B cell (primary cell): ENCODE measurements at regions of chr18 and their contacts with region 1.

Region 1: DNA sequence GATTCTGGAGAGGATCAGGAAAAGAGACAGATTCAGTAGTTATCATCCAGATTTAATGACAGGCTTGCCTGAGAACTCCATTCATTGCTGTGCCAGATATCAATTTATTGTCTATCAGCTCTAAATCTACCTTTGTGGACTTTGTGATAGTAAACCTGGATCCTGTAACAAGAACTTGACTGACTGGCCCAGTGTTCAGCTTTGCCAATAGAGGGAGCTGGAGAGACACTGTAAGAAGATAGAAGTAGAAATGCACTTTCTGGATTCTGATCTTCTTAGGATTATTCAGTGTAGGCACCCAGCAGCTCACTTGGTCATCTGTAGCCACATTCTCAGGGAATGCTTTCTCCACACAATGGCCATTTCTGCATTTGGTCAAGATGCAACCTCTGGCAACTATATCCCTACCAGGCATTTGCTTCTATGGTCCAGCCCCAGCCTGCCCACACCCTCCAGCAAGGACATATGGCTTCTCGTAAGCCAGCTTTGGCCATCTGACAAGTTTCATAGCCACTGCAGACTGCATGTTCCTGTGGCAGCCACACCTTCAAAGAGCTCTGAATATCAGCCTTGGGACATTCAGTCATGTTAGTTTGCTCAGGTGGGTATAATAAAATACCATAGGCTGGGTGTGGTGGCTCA is 6.1 kb upstream of the SERPINB8 start:
- DNase-seq: peak; percentile 72
- ATAC-seq: peak; percentile 63
- H3K4me3 ChIP-seq: no peak overlapping the region
- H3K4me3 Mint-ChIP-seq: no peak overlapping the region
- H3K27ac ChIP-seq: no peak overlapping the region
- H3K27ac Mint-ChIP-seq: no peak overlapping the region
- H3K4me1 ChIP-seq: no peaks in the 10 kb centered on the region
- H3K4me1 Mint-ChIP-seq: no peaks in the 10 kb centered on the region
- H3K27me3 ChIP-seq: no peaks in the 10 kb centered on the region
- H3K27me3 Mint-ChIP-seq: peaks cover 4% of the 10 kb centered on the region
- CTCF ChIP-seq: peak; percentile 89

Region 2: DNA sequence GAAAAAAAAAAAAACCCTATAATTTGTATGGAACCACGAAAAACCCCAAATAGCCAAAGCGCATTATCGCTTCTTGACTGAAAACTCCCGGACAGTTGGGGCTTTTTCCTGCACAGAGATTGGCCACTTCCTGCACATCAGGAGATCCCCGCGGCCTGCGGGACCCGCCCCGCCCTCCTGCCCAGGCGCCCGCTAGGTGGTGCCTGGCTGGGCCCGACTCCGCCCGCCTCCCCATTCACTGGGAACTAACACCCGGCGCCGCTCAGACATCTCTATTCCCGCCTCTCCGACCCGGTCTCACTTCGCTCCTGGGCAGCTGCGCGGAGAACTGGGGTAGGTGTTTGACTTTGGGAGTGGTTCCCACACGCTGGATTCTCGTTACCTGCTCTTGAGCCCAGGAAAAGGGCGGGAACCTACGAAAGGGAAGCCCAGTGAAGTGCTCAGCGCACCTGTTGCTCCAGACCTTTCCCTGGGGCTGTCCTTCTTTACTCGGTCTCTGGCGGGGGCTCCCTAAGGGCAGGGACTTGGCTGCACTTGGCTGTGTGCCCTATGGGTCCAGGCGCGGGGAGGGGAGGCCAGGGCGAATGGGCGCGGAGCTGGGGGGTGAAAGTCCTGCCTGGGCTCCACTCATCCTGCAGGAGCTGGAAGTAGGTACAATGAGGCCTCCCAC is 14.5 kb before region 1 on chr18 and contains the start of gene HMSD:
- CTCF ChIA-PET with region 1: interaction called, 18 read pairs
- POLR2A ChIA-PET with region 1: no interaction called
- intact Hi-C with region 1: no loop called
- DNase-seq: peak; percentile 70
- ATAC-seq: peak; percentile 92
- H3K4me3 ChIP-seq: peak within 1 kb of the TSS in 4 of 5 experiments; percentile 22 to 59 (median 47)
- H3K4me3 Mint-ChIP-seq: peak within 1 kb of the TSS; percentile 76
- H3K27ac ChIP-seq: no peak within 1 kb of the TSS
- H3K27ac Mint-ChIP-seq: no peak within 1 kb of the TSS
- H3K4me1 ChIP-seq: peaks cover 8% of the 10 kb centered on the region in 2 donors
- H3K4me1 Mint-ChIP-seq: peaks cover 19% of the 10 kb centered on the region
- H3K27me3 ChIP-seq: peaks cover 0 to 10% (median 4%) of the 10 kb centered on the region in 4 experiments
- H3K27me3 Mint-ChIP-seq: peaks cover 22% of the 10 kb centered on the region
- CTCF ChIP-seq: peak; percentile 53
- total RNA-seq, gene HMSD: not detected in 2 replicates

Region 3: DNA sequence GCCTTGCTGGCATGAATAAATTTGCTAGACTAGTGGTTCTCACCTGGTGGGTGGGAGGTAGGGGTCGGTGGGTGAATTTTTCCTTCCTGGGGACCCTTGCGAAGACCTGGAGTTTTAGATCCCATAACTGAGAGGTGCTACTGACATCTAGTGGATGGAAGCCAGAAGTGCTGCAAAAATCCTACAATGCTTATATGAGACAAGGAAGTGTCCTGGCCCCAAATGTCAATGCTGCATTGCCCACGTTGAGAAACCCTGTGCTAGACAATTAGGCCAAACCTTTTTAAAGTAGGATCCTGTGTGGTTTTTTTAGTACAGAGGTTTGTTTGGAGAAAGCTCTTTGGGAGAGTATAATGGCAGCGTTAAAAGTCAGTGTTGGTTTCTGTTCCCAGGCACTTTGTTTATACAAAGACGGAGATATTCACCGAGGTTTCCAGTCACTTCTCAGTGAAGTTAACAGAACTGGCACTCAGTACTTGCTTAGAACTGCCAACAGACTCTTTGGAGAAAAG is 15.7 kb after region 1 on chr18:
- CTCF ChIA-PET with region 1: interaction called, 44 read pairs
- POLR2A ChIA-PET with region 1: no interaction called
- intact Hi-C with region 1: loop called (anchors 1 kb)
- DNase-seq: peak; percentile 72
- ATAC-seq: peak; percentile 80
- H3K4me3 ChIP-seq: no peak overlapping the region
- H3K4me3 Mint-ChIP-seq: no peak overlapping the region
- H3K27ac ChIP-seq: no peak overlapping the region
- H3K27ac Mint-ChIP-seq: peak overlapping the region; percentile 1
- H3K4me1 ChIP-seq: peaks cover 15 to 21% of the 10 kb centered on the region in 2 donors
- H3K4me1 Mint-ChIP-seq: peaks cover 31% of the 10 kb centered on the region
- H3K27me3 ChIP-seq: no peaks in the 10 kb centered on the region
- H3K27me3 Mint-ChIP-seq: no peaks in the 10 kb centered on the region
- CTCF ChIP-seq: peak; percentile 91

Region 4: GRCh38 chr18:63994783-63995399 is 31.2 kb after region 1 on chr18:
- CTCF ChIA-PET with region 1: interaction called, 50 read pairs
- POLR2A ChIA-PET with region 1: no interaction called
- intact Hi-C with region 1: loop called (anchors 1 kb)
- DNase-seq: peak; percentile 56
- ATAC-seq: peak; percentile 58
- H3K4me3 ChIP-seq: no peak overlapping the region
- H3K4me3 Mint-ChIP-seq: no peak overlapping the region
- H3K27ac ChIP-seq: no peak overlapping the region
- H3K27ac Mint-ChIP-seq: no peak overlapping the region
- H3K4me1 ChIP-seq: no peaks in the 10 kb centered on the region
- H3K4me1 Mint-ChIP-seq: no peaks in the 10 kb centered on the region
- H3K27me3 ChIP-seq: no peaks in the 10 kb centered on the region
- H3K27me3 Mint-ChIP-seq: no peaks in the 10 kb centered on the region
- CTCF ChIP-seq: peak; percentile 92

Region 5: DNA sequence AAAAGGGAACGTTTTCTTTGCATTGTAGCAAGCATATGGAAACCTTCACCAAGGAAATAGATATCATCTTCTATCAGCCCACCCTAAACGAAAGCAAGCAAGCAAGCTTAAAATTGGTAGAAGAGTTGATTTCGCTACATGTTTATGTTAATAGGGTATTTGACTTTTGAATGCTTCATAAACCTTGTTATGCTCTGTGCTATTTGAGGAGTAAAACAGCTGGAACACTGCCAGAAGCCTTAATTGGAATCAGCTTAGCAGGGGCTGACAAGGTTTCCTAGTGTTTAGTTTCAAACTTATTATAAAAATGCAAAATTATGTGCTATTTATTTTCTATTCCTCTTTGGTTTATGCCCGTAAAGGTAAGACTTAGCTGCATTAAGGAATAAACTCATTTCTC is 255.8 kb after region 1 on chr18:
- CTCF ChIA-PET with region 1: no interaction called
- POLR2A ChIA-PET with region 1: no interaction called
- intact Hi-C with region 1: no loop called
- DNase-seq: no peak
- ATAC-seq: no peak
- H3K4me3 ChIP-seq: no peak overlapping the region
- H3K4me3 Mint-ChIP-seq: no peak overlapping the region
- H3K27ac ChIP-seq: no peak overlapping the region
- H3K27ac Mint-ChIP-seq: no peak overlapping the region
- H3K4me1 ChIP-seq: no peaks in the 10 kb centered on the region
- H3K4me1 Mint-ChIP-seq: no peaks in the 10 kb centered on the region
- H3K27me3 ChIP-seq: no peaks in the 10 kb centered on the region
- H3K27me3 Mint-ChIP-seq: no peaks in the 10 kb centered on the region
- CTCF ChIP-seq: no peak